Body of pancreas (tissue), 4 donors: ENCODE measurements at regions of chr12 and their contacts with region 1.

Region 1: DNA sequence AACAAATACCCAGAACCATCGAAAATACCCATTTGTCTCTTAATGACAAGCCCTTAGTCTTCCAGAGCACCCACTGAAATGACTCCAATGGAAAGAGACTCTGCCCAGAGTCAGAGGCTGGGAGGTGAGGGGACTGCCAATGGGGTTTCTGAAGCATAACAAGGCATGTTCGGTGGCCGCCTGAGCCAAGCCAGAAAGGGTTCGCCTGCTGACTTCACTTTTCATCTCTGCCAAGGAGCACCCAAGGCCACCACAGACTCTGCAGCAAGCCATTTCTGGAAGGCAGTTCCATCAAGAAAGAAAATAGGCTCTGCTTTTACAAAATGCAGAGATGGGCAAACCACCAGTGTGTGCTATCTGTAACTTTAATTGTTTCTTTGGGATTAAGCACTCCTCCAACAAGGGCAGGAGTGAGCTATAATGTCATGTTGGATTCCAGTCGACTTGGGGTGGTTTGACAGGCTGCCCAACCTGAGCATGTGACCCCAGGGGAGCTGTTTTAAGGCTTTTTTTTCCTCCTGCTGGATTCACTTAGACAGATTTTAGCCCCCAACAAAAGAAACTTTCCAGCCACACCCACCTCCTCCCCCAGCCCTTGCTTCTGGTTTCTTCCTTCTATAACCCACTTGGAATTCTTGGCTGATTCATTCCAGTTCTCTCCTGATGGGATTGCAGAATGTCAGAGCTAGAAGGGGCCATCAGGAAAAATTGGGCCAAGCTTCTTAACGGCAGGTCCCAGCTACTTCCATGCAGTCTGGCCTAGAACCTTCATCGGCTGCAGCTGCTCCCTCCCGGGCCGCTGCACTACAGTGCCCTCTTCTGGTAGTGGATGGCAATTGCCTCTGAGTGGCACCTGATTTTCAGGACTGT is 24.1 kb downstream of the CKAP4 start:
- DNase-seq: peak; percentile 67 to 75 (median 74)
- ATAC-seq: peak; percentile 84
- H3K4me3 ChIP-seq: no peak overlapping the region
- H3K27ac ChIP-seq: no peak overlapping the region
- H3K4me1 ChIP-seq: no peaks in the 10 kb centered on the region
- H3K27me3 ChIP-seq: no peaks in the 10 kb centered on the region
- CTCF ChIP-seq: peak; percentile 83 to 98 (median 90)
- POLR2A ChIP-seq: no peak

Region 2: GRCh38 chr12:105420659-105421240 is 803.0 kb before region 1 on chr12:
- intact Hi-C with region 1: loop called (anchors 5 kb)
- DNase-seq: peak; percentile 76 to 81 (median 79)
- ATAC-seq: peak; percentile 95
- H3K4me3 ChIP-seq: no peak overlapping the region
- H3K27ac ChIP-seq: no peak overlapping the region
- H3K4me1 ChIP-seq: no peaks in the 10 kb centered on the region
- H3K27me3 ChIP-seq: no peaks in the 10 kb centered on the region
- CTCF ChIP-seq: peak; percentile 75 to 96 (median 91)
- POLR2A ChIP-seq: no peak

Region 3: DNA sequence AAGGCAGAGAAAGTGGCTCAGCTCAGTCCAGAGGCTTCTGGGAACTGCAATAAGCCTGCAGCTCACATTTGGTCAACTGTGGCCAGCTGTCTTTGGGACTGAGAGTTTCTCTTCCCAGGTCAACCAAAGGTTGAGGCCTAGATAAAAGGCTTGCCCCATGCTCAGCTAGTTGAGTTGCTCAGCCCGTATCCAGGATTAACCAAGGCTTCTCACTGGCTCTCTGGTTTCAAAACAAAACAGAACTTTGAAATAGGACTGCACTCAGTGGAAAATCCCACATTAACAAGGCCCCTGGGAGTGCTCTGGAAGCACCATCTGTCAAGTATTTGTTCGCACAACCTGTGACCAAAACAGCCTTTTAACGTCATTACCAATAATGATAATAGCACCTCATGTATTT is 44.6 kb before region 1 on chr12:
- intact Hi-C with region 1: no loop called
- DNase-seq: peak in 3 of 4 donors; percentile 15 to 38 (median 18)
- ATAC-seq: peak; percentile 42
- H3K4me3 ChIP-seq: no peak overlapping the region
- H3K27ac ChIP-seq: peak overlapping the region in 2 of 4 donors; percentile 9 to 19
- H3K4me1 ChIP-seq: no peaks in the 10 kb centered on the region
- H3K27me3 ChIP-seq: no peaks in the 10 kb centered on the region
- CTCF ChIP-seq: no peak
- POLR2A ChIP-seq: no peak

Region 4: DNA sequence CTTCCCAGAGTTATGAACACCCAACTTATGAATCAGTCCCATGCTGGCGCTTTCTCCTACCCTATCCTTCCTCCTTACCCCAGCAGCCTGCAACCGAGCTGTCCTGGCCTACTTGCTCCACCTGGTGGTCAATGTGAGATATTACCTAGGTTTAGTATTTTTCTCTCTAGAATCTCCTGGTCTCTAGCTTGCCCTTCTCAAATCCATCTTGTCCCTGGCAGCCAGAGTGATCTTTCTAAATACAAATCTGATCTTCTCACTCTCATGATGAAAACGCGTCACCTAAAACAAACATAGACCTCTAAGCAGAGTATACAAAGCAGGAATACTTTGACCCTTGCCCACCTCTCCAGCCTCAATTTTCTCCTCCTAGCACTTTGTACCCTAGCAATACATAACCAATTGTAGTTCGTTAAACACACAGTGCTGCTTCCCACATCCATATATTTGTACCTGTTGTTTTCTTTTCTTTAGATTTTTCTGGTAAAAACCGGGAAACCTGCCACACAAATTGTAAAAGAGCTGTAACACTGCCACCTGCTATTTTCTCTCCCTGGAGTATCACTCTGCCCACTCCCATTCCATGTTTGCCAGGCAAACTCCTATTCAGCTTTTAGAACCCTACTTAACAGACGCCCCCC is 58.9 kb after region 1 on chr12:
- intact Hi-C with region 1: loop called (anchors 5 kb)
- DNase-seq: peak; percentile 60 to 73 (median 66)
- ATAC-seq: peak; percentile 88
- H3K4me3 ChIP-seq: no peak overlapping the region
- H3K27ac ChIP-seq: no peak overlapping the region
- H3K4me1 ChIP-seq: peaks cover 12% of the 10 kb centered on the region
- H3K27me3 ChIP-seq: no peaks in the 10 kb centered on the region
- CTCF ChIP-seq: peak; percentile 37 to 92 (median 87)
- POLR2A ChIP-seq: no peak